CD8-positive, alpha-beta T cell (primary cell): ENCODE measurements at regions of chr20 and their contacts with region 1.

Region 1: DNA sequence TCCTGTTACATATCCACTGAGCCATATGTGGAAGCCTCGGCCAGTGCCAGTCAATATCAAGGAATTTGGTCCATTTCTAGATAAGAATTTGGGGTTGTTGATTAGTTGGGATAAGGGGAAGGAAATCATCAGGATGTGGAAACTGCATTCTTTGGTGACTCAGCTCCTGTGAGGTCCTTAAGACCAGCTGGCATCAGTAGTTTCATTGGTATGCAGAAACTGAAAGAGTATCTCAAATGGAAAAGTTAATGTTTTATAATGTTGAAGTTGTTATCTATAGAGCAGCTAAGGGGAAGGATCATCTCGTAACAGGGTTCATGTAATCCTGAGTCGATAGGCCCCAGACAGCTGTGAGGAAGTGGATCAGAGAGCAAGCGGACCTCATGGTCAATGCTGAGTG is 87.9 kb upstream of the PRND start:
- DNase-seq: no peak
- ATAC-seq: no peak
- H3K4me3 ChIP-seq: no peak overlapping the region
- H3K4me3 Mint-ChIP-seq: no peak overlapping the region
- H3K27ac ChIP-seq: no peak overlapping the region
- H3K27ac Mint-ChIP-seq: no peak overlapping the region
- H3K4me1 ChIP-seq: no peaks in the 10 kb centered on the region
- H3K4me1 Mint-ChIP-seq: no peaks in the 10 kb centered on the region
- H3K27me3 ChIP-seq: no peaks in the 10 kb centered on the region
- H3K27me3 Mint-ChIP-seq: peaks cover 5% of the 10 kb centered on the region
- CTCF ChIP-seq: no peak

Region 2: GRCh38 chr20:4708856-4709255 is 75.1 kb after region 1 on chr20:
- CTCF ChIA-PET with region 1: no interaction called
- POLR2A ChIA-PET with region 1: no interaction called
- intact Hi-C with region 1: loop called in 1 of 2 experiments (anchors 5 kb)
- DNase-seq: no peak
- ATAC-seq: no peak
- H3K4me3 ChIP-seq: no peak overlapping the region
- H3K4me3 Mint-ChIP-seq: no peak overlapping the region
- H3K27ac ChIP-seq: no peak overlapping the region
- H3K27ac Mint-ChIP-seq: no peak overlapping the region
- H3K4me1 ChIP-seq: no peaks in the 10 kb centered on the region
- H3K4me1 Mint-ChIP-seq: peaks cover 4% of the 10 kb centered on the region
- H3K27me3 ChIP-seq: no peaks in the 10 kb centered on the region
- H3K27me3 Mint-ChIP-seq: peaks cover 2% of the 10 kb centered on the region
- CTCF ChIP-seq: no peak